ENCODE measurements at regions of chr1 and their contacts with region 1.

Region 1: GRCh38 chr1:148307583-148308190 is 155.6 kb upstream of the NBPF11 start:
- DNase-seq: no peak
- H3K4me3 ChIP-seq: no peak overlapping the region
- H3K27ac ChIP-seq: no peak overlapping the region
- H3K4me1 ChIP-seq: peaks cover 6% of the 10 kb centered on the region
- H3K27me3 ChIP-seq: peaks cover 5% of the 10 kb centered on the region
- CTCF ChIP-seq: no peak

Region 2: GRCh38 chr1:148353461-148354283 is 46.0 kb after region 1 on chr1:
- CTCF ChIA-PET with region 1: no interaction called
- dilution Hi-C with region 1: no loop called
- in situ Hi-C with region 1: no loop called
- intact Hi-C with region 1: loop called (anchors 2 kb)
- DNase-seq: peak; percentile 74
- H3K4me3 ChIP-seq: no peak overlapping the region
- H3K27ac ChIP-seq: no peak overlapping the region
- H3K4me1 ChIP-seq: no peaks in the 10 kb centered on the region
- H3K27me3 ChIP-seq: peaks cover 3% of the 10 kb centered on the region
- CTCF ChIP-seq: no peak

Measured in mammary epithelial cell (primary cell).